HEK293 (cell line): ENCODE measurements at regions of chr21 and their contacts with region 1.

Region 1: DNA sequence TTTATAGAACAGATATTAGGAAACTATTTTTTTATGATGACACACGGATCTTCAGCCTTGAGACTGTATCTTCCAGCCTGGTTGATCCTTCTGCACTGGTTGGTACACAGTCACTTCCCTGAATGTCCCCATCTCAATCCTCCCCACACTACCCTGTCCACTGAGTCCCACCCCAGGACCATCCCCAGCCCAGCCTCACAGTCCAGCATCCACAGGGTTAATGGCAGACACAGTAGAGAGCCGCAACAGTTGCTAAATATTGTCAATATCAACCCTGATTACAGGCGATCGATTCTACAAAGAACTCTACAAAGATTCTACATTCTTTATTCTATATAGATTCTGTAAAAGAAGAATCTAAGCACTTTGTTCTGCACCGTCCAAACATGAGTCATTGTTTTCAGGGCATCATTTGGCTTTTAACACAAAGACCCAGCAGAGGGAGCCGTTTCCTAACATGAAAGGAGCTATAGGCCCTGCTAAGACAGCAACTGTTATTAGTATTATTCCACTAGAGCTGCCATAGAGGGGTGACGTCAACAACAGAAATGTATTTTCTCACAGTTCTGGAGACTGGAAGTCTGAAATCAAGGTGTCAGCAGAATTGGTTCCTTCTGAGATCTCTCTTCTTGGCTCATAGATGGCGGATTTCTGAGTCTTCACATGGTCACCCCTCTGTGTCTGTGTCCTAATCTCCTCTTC is 30.1 kb upstream of the IFNAR2 start:
- H3K4me3 ChIP-seq: no peak overlapping the region
- H3K27ac ChIP-seq: no peak overlapping the region
- H3K4me1 ChIP-seq: no peaks in the 10 kb centered on the region
- CTCF ChIP-seq: peak; percentile 81

Region 2: GRCh38 chr21:32826329-32827167 is 373.1 kb before region 1 on chr21:
- CTCF ChIA-PET with region 1: interaction called, 38 read pairs
- POLR2A ChIA-PET with region 1: no interaction called
- H3K4me3 ChIP-seq: no peak overlapping the region
- H3K27ac ChIP-seq: no peak overlapping the region
- H3K4me1 ChIP-seq: no peaks in the 10 kb centered on the region
- CTCF ChIP-seq: peak; percentile 80

Region 3: DNA sequence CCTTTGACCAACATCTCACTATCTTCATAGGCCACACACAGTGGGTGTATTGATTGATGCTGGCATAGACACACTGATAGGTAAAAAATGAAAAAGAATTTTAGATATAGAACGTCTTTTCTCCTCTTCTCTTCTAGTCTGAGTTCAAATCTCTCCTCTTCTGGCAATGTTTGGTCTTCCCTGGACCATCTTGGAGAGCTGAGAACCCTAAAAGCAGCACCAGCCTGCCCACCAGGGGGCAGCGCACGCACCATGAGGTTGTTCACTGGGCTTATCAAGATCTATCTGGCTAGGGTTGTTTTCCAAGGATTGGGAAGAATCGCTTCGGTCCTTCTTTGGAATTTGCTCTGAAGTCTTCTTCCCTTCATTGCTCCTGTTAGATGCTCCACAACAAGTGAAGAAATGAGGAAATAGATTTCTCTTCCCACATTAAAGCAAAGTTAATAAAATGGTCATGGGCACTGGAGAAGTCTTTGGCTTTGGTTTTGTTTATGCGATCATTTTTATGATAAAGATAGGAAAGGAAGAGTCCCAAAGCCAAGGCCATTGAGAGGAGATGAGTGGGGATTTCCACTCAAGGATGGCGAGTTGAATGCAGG is 277.9 kb before region 1 on chr21:
- CTCF ChIA-PET with region 1: interaction called, 10 read pairs
- POLR2A ChIA-PET with region 1: no interaction called
- H3K4me3 ChIP-seq: no peak overlapping the region
- H3K27ac ChIP-seq: no peak overlapping the region
- H3K4me1 ChIP-seq: no peaks in the 10 kb centered on the region
- CTCF ChIP-seq: no peak

Region 4: GRCh38 chr21:32994305-32994704 is 205.4 kb before region 1 on chr21:
- CTCF ChIA-PET with region 1: interaction called, 47 read pairs
- POLR2A ChIA-PET with region 1: no interaction called
- H3K4me3 ChIP-seq: no peak overlapping the region
- H3K27ac ChIP-seq: no peak overlapping the region
- H3K4me1 ChIP-seq: no peaks in the 10 kb centered on the region
- CTCF ChIP-seq: no peak

Region 5: DNA sequence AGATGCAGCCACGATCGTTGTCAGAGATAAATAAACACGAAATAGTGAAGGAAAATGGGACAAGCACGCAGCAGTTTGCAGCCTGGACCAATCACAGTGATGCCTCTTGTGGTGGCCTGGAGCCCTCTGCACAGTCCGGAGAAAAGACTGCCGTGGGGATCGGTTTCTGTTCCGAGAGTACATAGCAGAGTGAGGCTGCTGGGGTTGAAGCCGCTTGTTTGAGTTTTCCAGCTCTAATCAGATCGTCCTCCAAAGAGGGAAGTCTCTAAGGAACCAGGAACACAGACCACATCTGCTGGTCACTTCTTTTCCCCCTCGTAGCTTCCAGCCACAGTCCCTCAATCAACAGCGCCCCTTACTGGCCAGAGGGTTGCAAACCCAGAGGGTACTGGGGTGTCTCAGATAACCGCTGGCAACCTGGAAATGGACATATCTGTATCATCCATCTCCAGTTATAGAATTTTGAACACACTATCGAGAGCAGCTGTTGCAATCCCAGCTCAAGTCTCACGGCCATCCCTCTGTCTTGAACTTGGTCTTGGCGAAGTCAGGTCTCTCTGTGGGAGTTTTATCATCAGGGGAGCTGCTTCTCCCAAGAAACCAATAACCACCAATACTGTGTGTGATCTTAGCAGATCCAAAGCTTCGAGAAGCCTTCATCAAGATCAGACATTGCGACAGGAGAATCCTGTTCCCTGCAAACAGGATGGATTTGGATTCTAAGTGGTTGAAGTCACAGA is 72.3 kb before region 1 on chr21:
- CTCF ChIA-PET with region 1: interaction called, 13 read pairs
- POLR2A ChIA-PET with region 1: no interaction called
- H3K4me3 ChIP-seq: peak overlapping the region; percentile 11
- H3K27ac ChIP-seq: no peak overlapping the region
- H3K4me1 ChIP-seq: no peaks in the 10 kb centered on the region
- CTCF ChIP-seq: peak; percentile 84

Region 6: GRCh38 chr21:33360881-33361602 is 161.4 kb after region 1 on chr21:
- CTCF ChIA-PET with region 1: interaction called, 26 read pairs
- POLR2A ChIA-PET with region 1: interaction called, 3 read pairs
- H3K4me3 ChIP-seq: no peak overlapping the region; the same call in 1 of the 2 replicates
- H3K27ac ChIP-seq: no peak overlapping the region
- H3K4me1 ChIP-seq: no peaks in the 10 kb centered on the region
- CTCF ChIP-seq: peak; percentile 86

Region 7: GRCh38 chr21:33406493-33406892 is 206.8 kb after region 1 on chr21:
- CTCF ChIA-PET with region 1: no interaction called
- POLR2A ChIA-PET with region 1: no interaction called
- H3K4me3 ChIP-seq: no peak overlapping the region
- H3K27ac ChIP-seq: no peak overlapping the region
- H3K4me1 ChIP-seq: peaks cover 7% of the 10 kb centered on the region
- CTCF ChIP-seq: no peak

Region 8: DNA sequence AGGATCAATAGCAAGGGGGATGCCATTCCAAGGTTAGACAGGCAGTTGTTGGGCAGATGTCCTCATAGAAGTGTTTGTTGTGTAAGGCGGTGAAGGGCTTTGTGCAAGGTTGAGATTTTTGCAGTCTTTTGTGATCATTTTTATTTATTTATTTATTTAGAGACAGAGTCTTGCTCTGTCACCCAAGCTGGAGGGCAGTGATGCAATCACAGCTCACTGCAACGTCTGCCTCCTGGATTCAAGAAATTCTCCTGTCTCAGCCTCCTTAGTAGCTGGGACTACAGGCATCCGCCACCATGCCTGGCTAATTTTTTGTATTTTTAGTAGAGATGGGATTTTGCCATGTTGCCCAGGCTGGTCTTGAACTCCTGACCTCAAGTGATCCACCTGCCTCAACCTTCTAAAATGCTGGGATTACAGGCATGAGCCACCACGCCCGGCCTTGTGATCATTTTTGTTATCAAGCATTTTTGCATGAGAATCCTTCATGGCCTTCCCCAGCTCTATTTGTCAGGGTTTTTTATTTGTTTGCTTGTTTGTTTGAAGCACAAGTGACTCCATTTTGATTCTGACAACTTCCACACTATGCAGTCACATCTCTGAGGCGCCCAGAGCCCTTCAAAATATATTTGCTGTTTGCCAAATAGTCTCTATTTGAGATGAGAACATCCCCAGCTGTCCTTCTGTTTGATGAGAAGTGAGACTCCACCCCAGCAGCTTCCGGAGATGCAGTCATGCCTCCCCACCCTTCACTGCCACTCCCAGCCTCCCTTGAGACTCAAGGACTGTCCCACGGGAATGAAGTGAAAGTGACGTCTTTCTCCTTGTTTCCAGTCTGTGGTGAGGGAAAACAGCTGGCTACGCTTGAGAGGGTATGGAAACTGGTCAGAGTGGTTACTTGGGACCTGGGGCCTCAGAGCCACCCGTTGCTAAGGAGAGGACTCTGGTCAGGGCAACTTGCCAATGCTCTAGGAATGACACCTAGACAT is 242.1 kb after region 1 on chr21:
- CTCF ChIA-PET with region 1: interaction called, 60 read pairs
- POLR2A ChIA-PET with region 1: interaction called, 4 read pairs
- H3K4me3 ChIP-seq: no peak overlapping the region
- H3K27ac ChIP-seq: no peak overlapping the region
- H3K4me1 ChIP-seq: peaks cover 4% of the 10 kb centered on the region; the same call in 1 of the 2 replicates
- CTCF ChIP-seq: no peak